Heart left ventricle (tissue), 16 donors: ENCODE measurements at regions of chr5 and their contacts with region 1.

Region 1: DNA sequence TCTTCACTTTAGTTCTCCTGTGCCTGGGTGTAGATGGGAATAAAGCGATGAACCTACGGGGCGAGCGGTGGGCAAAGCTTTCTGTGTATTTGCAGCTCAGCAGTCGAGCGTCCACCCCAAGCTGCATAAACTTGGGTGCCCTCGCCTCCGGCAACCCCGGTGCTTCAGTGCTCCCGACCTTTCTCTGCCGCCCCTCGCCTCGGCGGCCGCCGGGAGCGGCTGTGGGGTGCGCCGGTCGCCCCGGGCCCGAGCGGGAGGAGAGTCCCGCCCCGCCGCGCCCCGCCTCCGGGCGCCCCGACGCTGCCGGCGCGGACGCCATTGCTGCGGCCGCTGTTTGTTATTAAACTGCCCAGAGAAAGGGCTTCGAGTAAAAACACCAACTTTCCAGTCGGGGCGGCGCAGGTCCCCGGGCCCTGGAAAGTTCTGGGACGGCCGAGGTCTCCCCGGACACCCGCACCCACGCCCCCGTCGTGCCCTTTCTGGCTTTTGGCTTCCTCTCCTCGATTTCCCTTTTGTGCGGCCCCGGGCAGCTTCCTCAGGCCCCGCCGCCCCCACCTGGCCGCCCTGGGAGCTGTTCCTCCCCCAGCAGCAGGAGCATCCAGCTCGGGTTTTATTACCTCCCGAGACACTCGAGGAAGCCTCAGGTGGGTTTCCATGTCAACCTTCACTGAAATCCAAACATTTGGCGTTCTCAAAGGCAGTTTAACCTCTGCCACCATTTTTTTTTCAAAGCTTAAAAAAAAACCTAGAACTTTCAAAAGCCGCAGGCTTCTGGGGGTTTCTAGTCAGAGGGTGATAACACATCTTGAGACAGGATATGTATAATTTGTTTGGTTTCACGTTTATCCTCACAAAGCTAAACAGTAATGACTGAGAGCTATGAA is 334.3 kb downstream of the CWC27 start:
- DNase-seq: peak; percentile 71 to 80 (median 75)
- ATAC-seq: peak; percentile 65 to 89 (median 88)
- H3K4me3 ChIP-seq: peak overlapping the region; percentile 35 to 89 (median 69)
- H3K27ac ChIP-seq: peak overlapping the region; percentile 75 to 94 (median 88)
- H3K4me1 ChIP-seq: peaks cover 0 to 22% (median 8%) of the 10 kb centered on the region in 12 donors
- H3K27me3 ChIP-seq: no peaks in the 10 kb centered on the region
- CTCF ChIP-seq: peak; percentile 17 to 65 (median 46)
- POLR2A ChIP-seq: peak in 1 of 2 donors; percentile 24

Region 2: GRCh38 chr5:64811050-64811640 is 291.9 kb before region 1 on chr5:
- intact Hi-C with region 1: loop called in 5 of 10 experiments (anchors 5 to 10 kb)
- DNase-seq: no peak
- ATAC-seq: peak in 1 of 4 donors; percentile 57
- H3K4me3 ChIP-seq: no peak overlapping the region
- H3K27ac ChIP-seq: no peak overlapping the region
- H3K4me1 ChIP-seq: peaks cover 0 to 16% (median 5%) of the 10 kb centered on the region in 12 donors
- H3K27me3 ChIP-seq: no peaks in the 10 kb centered on the region
- CTCF ChIP-seq: peak; percentile 52 to 83 (median 70)
- POLR2A ChIP-seq: no peak

Region 3: DNA sequence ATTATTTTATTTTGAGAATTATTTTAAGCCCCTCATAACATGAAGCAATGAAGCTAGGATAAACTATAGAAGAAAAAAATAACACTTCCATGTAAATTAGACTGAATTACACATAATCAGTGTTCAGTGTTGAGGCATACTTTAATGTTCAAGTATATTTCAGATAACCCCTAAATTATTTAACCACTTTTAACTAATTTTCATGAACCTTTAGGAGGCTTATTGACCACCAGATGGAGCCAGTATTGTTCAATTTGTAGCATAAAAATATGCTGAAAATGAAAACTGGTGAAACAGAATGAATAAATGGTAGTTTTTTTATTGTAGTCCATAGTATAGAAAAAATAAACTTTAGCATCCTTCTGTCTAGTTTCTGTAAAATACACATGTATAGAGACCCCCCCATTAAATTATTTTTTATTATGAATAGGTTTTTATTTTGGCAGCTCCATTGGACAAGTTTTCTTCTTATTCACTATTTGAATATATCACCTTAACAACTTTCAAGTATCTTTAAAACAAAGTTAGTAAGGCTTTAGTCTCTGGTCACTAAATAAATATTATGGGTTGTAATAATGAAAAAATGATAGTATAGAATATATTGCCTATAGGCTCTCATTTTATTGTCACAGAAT is 144.2 kb before region 1 on chr5:
- intact Hi-C with region 1: loop called in 8 of 10 experiments (anchors 2 to 10 kb)
- DNase-seq: no peak
- ATAC-seq: no peak
- H3K4me3 ChIP-seq: no peak overlapping the region
- H3K27ac ChIP-seq: no peak overlapping the region
- H3K4me1 ChIP-seq: no peaks in the 10 kb centered on the region
- H3K27me3 ChIP-seq: no peaks in the 10 kb centered on the region
- CTCF ChIP-seq: peak; percentile 30 to 73 (median 59)
- POLR2A ChIP-seq: no peak

Region 4: DNA sequence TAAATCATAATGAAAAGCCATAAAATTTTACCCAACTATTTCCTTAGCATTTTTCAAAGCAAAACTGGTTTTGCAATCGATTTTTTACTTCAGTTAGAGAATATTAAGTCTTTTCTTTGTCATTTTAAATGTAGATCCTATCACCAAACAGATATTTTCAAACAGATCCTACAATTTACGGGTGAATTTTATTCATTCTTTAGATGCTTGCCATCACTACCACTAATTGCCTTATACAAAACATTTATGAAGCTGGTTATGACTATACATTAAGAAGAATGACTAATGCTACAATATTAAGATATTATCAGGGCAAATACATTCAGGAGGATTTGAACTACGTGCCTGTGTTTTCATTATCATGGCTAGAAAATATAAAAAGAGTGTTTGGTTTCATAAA is 137.5 kb before region 1 on chr5:
- intact Hi-C with region 1: loop called in 5 of 10 experiments (anchors 5 to 10 kb)
- DNase-seq: no peak
- ATAC-seq: no peak
- H3K4me3 ChIP-seq: no peak overlapping the region
- H3K27ac ChIP-seq: no peak overlapping the region
- H3K4me1 ChIP-seq: no peaks in the 10 kb centered on the region
- H3K27me3 ChIP-seq: no peaks in the 10 kb centered on the region
- CTCF ChIP-seq: no peak
- POLR2A ChIP-seq: no peak

Region 5: DNA sequence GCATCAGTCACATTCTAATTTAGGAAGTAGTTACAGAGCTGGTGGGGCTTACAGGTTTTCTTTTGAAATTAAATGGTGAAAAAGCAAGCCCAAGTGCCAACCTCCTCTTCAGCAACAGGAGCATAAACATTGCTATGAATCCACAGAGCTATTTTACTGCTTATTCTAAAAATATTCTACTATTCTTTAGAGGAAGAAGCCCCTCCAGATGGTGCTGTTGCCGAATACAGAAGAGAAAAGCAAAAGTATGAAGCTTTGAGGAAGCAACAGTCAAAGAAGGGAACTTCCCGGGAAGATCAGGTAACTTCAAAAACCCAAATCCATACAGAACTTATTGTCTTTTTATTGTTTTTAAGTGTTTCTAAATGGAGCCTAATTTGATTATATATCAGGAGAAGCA is 131.6 kb before region 1 on chr5:
- intact Hi-C with region 1: loop called in 4 of 10 experiments (anchors 5 to 10 kb)
- DNase-seq: no peak
- ATAC-seq: no peak
- H3K4me3 ChIP-seq: no peak overlapping the region
- H3K27ac ChIP-seq: no peak overlapping the region
- H3K4me1 ChIP-seq: peaks cover 0 to 23% (median 1%) of the 10 kb centered on the region in 12 donors
- H3K27me3 ChIP-seq: no peaks in the 10 kb centered on the region
- CTCF ChIP-seq: peak in 8 of 12 donors; percentile 10 to 50 (median 28)
- POLR2A ChIP-seq: no peak

Region 6: DNA sequence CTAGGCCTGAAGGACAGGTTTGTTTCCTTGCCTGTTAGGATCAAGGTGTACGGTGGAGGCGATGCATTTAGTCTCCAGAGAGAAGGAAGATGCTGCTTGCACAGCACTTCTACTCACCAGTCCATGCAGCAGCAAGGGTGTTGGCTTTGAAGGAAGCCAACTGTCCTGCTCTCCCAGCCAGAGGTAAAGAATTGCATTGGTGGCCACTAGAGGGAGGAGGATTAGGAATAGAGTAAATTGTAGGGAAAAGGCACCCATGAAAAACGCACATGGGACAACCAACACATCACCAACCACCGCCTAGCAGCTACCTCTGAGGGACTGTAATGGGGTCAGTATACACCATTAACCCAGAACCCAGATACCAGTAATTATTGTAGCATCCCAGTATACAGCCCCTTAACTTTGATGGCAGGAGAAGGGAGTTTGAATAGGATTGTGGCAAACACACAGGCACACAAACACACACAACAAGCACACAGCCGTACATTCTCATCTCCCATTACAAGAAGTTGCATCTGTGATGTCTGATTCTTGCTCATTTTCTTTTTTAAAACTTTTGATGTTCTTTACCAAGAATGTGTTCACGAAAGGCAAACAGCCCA is 111.0 kb after region 1 on chr5:
- intact Hi-C with region 1: loop called in 1 of 10 experiments (anchors 5 kb)
- DNase-seq: peak in 1 of 5 donors; percentile 6
- ATAC-seq: peak in 3 of 4 donors; percentile 48 to 70 (median 52)
- H3K4me3 ChIP-seq: no peak overlapping the region
- H3K27ac ChIP-seq: no peak overlapping the region
- H3K4me1 ChIP-seq: no peaks in the 10 kb centered on the region
- H3K27me3 ChIP-seq: no peaks in the 10 kb centered on the region
- CTCF ChIP-seq: peak in 11 of 12 donors; percentile 32 to 60 (median 39)
- POLR2A ChIP-seq: no peak

Region 7: DNA sequence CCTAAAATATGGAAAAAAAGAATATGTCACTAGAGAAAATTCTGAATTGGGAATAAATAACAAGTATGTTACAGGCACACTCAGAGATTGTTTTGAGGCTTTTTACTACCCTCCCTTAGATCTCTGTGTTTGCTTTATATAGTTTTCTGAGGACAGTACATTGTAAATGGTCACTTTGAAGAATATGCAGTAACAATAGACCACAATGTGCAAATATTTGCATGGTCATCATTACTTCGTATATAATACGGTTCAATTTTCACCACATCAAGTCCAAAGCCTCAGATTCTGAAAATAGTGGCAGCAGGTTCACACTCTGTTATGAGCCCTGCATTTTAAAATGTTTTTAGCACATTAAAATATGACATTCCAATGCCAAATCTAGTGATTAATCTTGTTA is 140.1 kb after region 1 on chr5:
- intact Hi-C with region 1: no loop called
- DNase-seq: no peak
- ATAC-seq: no peak
- H3K4me3 ChIP-seq: no peak overlapping the region
- H3K27ac ChIP-seq: no peak overlapping the region
- H3K4me1 ChIP-seq: no peaks in the 10 kb centered on the region
- H3K27me3 ChIP-seq: no peaks in the 10 kb centered on the region
- CTCF ChIP-seq: no peak
- POLR2A ChIP-seq: no peak

Region 8: GRCh38 chr5:65654713-65655112 is 551.6 kb after region 1 on chr5:
- intact Hi-C with region 1: no loop called
- DNase-seq: no peak
- ATAC-seq: no peak
- H3K4me3 ChIP-seq: no peak overlapping the region
- H3K27ac ChIP-seq: no peak overlapping the region
- H3K4me1 ChIP-seq: no peaks in the 10 kb centered on the region
- H3K27me3 ChIP-seq: no peaks in the 10 kb centered on the region
- CTCF ChIP-seq: no peak
- POLR2A ChIP-seq: no peak